Activated CD8-positive, alpha-beta T cell treated with anti-CD3 and anti-CD28 coated beads for 36 hours (primary cell): ENCODE measurements at regions of chr1 and their contacts with region 1.

Region 1: GRCh38 chr1:38834937-38835827 is 24.4 kb downstream of the RRAGC start:
- DNase-seq: peak; percentile 56
- ATAC-seq: peak; percentile 84
- H3K4me3 Mint-ChIP-seq: no peak overlapping the region
- H3K27ac Mint-ChIP-seq: no peak overlapping the region
- H3K4me1 Mint-ChIP-seq: peaks cover 3% of the 10 kb centered on the region
- H3K27me3 Mint-ChIP-seq: peaks cover 4% of the 10 kb centered on the region
- CTCF ChIP-seq: peak; percentile 77

Region 2: GRCh38 chr1:38608202-38608864 is 226.8 kb before region 1 on chr1:
- CTCF ChIA-PET with region 1: interaction called, 5 read pairs
- POLR2A ChIA-PET with region 1: no interaction called
- intact Hi-C with region 1: loop called (anchors 10 kb)
- DNase-seq: peak; percentile 58
- ATAC-seq: peak; percentile 53
- H3K4me3 Mint-ChIP-seq: no peak overlapping the region
- H3K27ac Mint-ChIP-seq: no peak overlapping the region
- H3K4me1 Mint-ChIP-seq: no peaks in the 10 kb centered on the region
- H3K27me3 Mint-ChIP-seq: peaks cover 15% of the 10 kb centered on the region
- CTCF ChIP-seq: peak; percentile 61

Region 3: GRCh38 chr1:38818175-38818976 is 16.8 kb before region 1 on chr1:
- CTCF ChIA-PET with region 1: interaction called, 67 read pairs
- POLR2A ChIA-PET with region 1: no interaction called
- intact Hi-C with region 1: no loop called
- DNase-seq: peak; percentile 50
- ATAC-seq: peak; percentile 74
- H3K4me3 Mint-ChIP-seq: no peak overlapping the region
- H3K27ac Mint-ChIP-seq: no peak overlapping the region
- H3K4me1 Mint-ChIP-seq: peaks cover 7% of the 10 kb centered on the region
- H3K27me3 Mint-ChIP-seq: peaks cover 72% of the 10 kb centered on the region
- CTCF ChIP-seq: peak; percentile 98

Region 4: GRCh38 chr1:38846210-38846609 is 11.0 kb after region 1 on chr1:
- CTCF ChIA-PET with region 1: interaction called, 16 read pairs
- POLR2A ChIA-PET with region 1: interaction called, 3 read pairs
- intact Hi-C with region 1: no loop called
- DNase-seq: no peak
- ATAC-seq: no peak
- H3K4me3 Mint-ChIP-seq: no peak overlapping the region
- H3K27ac Mint-ChIP-seq: no peak overlapping the region
- H3K4me1 Mint-ChIP-seq: no peaks in the 10 kb centered on the region
- H3K27me3 Mint-ChIP-seq: no peaks in the 10 kb centered on the region
- CTCF ChIP-seq: no peak

Region 5: GRCh38 chr1:38865112-38865715 is 30.0 kb after region 1 on chr1:
- CTCF ChIA-PET with region 1: no interaction called
- POLR2A ChIA-PET with region 1: no interaction called
- intact Hi-C with region 1: no loop called
- DNase-seq: no peak
- ATAC-seq: no peak
- H3K4me3 Mint-ChIP-seq: no peak overlapping the region
- H3K27ac Mint-ChIP-seq: no peak overlapping the region
- H3K4me1 Mint-ChIP-seq: peaks cover 27% of the 10 kb centered on the region
- H3K27me3 Mint-ChIP-seq: no peaks in the 10 kb centered on the region
- CTCF ChIP-seq: no peak